Activated CD4-positive, alpha-beta memory T cell treated with anti-CD3 and anti-CD28 coated beads for 36 hours (primary cell): ENCODE measurements at regions of chr3 and their contacts with region 1.

Region 1: DNA sequence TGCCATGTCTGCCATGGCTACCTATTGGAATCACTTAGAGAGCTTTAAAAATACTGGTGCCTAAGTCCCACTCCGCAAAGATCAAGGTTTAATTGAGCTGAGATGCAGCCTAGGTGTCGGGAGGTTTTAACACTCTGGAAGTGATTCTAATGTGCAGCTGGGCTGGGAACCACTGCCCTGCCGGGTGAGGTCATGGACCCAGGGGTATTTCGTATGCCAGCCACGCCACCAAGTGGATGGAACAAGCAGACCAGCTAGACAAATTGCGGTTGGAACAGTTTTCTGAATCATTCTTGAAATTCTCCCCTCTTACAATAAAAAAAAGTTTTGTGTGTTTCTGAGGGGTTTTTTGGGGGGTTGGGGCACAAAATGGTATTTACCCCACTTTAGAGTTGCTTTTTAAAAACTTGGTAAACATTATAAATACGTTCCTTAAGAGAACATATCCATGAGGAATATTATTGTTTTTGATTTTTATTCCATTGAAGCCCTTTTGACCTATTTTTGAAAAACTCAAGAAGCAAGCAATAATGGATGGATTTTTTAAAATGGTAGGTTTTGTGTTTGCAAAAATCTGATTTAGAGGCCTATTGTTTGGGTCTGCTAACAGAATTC is 66.2 kb upstream of the CSTA start:
- DNase-seq: peak; percentile 81
- H3K4me3 Mint-ChIP-seq: no peak overlapping the region
- H3K27ac Mint-ChIP-seq: peak overlapping the region; percentile 45
- H3K4me1 Mint-ChIP-seq: peaks cover 19% of the 10 kb centered on the region
- H3K27me3 Mint-ChIP-seq: peaks cover 15% of the 10 kb centered on the region

Region 2: GRCh38 chr3:121735047-121735696 is 523.7 kb before region 1 on chr3:
- CTCF ChIA-PET with region 1: no interaction called
- POLR2A ChIA-PET with region 1: no interaction called
- intact Hi-C with region 1: loop called (anchors 5 kb)
- DNase-seq: no peak
- H3K4me3 Mint-ChIP-seq: no peak overlapping the region
- H3K27ac Mint-ChIP-seq: peak overlapping the region; percentile 28
- H3K4me1 Mint-ChIP-seq: peaks cover 46% of the 10 kb centered on the region
- H3K27me3 Mint-ChIP-seq: no peaks in the 10 kb centered on the region

Region 3: DNA sequence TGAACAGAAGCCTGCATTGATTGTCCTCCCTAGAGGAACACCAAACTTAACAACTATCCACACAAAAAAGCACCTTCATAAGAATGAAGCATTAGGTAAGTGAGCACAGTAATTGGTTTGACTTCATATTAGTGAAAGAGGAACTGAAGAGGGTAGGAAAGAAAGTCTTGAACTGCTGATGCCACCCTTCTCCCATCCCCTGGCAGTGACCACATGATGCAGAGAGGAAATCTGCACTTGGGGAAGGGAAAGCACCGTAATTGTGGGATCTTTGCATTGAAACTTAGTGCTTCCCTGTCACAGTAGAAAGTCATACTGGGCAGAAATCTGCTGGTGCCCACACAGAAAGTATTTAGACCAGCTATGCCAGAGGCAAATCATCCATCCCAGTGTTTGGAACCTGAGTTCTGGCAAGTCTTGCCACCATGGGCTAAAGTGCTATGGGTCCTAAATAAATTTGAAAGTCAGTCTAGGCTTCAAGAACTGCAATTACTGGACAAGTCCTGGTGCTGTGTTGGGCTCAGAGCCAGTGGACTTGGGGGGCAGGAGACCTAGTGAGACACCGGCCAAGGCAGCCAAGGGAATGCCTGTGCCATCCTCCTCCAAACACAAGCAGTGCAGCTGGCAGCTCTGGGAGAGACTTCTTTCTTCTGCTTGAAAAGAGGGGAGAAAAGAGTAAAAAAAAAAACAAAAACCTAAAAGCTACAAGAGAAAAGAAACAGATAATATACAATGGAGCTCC is 301.0 kb before region 1 on chr3:
- CTCF ChIA-PET with region 1: no interaction called
- POLR2A ChIA-PET with region 1: no interaction called
- intact Hi-C with region 1: no loop called
- DNase-seq: no peak
- H3K4me3 Mint-ChIP-seq: no peak overlapping the region
- H3K27ac Mint-ChIP-seq: no peak overlapping the region
- H3K4me1 Mint-ChIP-seq: no peaks in the 10 kb centered on the region
- H3K27me3 Mint-ChIP-seq: no peaks in the 10 kb centered on the region

Region 4: DNA sequence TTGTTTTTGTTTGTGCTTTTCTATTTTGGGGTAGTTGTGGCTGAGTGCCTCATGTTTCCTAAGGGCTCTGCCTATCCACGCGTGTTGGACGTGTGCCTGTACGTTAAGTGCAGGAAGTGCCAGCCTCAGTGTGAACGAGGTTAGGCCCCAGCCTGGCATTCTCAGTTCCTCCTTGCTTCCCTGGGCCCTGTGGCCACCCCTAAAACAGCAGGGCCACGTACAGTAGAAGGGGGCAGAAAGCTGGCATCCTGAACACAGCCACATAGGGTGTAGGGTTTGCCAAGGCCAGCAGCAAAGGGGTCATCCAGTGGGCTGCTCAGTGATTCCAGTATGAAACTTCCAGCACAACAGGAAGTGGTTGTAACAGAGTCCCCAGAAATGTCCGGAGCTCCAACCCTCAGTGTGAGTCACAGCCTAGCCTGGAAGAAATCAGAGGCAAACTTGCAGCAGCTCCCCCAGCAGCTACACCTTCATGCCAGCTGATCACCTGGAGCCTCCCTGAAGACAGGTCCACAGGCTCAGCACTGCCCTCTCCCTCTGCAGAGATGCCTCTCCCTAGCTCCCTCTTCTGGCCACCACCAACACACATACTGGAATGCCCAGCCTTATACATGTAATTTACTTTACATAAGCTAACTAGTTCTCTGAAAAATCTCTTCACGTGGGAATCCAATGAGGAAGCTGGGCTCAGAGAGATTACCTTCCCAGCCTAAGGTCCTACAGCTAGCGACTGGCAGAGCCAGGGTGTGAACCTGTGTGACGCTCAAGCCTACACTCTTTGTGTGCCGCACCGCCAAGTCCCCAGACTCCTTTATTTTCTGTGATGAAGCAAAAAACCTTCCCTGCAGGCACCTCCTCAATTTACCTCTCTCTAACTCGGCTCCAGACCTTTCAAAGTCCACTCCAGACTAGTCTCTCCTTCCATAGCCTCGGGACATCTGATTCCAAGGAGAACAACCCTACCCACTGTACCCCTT is 263.4 kb before region 1 on chr3:
- CTCF ChIA-PET with region 1: interaction called, 6 read pairs
- POLR2A ChIA-PET with region 1: no interaction called
- intact Hi-C with region 1: loop called (anchors 5 kb)
- DNase-seq: peak; percentile 40
- H3K4me3 Mint-ChIP-seq: no peak overlapping the region
- H3K27ac Mint-ChIP-seq: no peak overlapping the region
- H3K4me1 Mint-ChIP-seq: peaks cover 29% of the 10 kb centered on the region
- H3K27me3 Mint-ChIP-seq: no peaks in the 10 kb centered on the region

Region 5: GRCh38 chr3:122227036-122227781 is 31.7 kb before region 1 on chr3:
- CTCF ChIA-PET with region 1: no interaction called
- POLR2A ChIA-PET with region 1: no interaction called
- intact Hi-C with region 1: no loop called
- DNase-seq: no peak
- H3K4me3 Mint-ChIP-seq: no peak overlapping the region
- H3K27ac Mint-ChIP-seq: no peak overlapping the region
- H3K4me1 Mint-ChIP-seq: peaks cover 2% of the 10 kb centered on the region
- H3K27me3 Mint-ChIP-seq: peaks cover 6% of the 10 kb centered on the region

Region 6: DNA sequence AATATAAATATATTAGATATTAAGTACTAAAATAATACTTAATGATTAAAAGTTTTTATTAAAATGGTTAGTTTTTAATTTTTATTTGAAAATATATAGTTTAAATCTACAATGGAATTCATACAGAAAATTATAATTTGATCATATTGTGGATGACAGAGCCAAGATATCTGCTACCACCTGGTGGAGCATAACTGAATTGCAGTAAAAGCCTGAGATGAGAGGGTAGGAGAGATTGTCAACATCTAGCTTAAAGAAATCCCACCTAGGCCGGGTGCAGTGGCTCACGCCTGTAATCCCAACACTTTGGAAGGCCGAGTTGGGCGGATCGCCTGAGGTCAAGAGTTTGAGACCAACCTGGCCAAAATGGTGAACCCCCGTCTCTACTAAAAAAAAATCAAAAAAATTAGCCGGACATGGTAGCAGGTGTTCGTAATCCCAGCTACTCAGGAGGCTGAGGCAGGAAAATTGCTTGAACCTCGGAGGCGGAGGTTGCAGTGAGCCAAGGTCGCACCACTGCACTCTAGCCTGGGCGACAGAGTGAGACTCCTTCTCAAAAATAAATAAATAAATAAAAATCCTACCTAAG is 41.1 kb after region 1 on chr3:
- CTCF ChIA-PET with region 1: interaction called, 6 read pairs
- POLR2A ChIA-PET with region 1: no interaction called
- intact Hi-C with region 1: loop called (anchors 2 kb)
- DNase-seq: no peak
- H3K4me3 Mint-ChIP-seq: no peak overlapping the region
- H3K27ac Mint-ChIP-seq: no peak overlapping the region
- H3K4me1 Mint-ChIP-seq: peaks cover 18% of the 10 kb centered on the region
- H3K27me3 Mint-ChIP-seq: no peaks in the 10 kb centered on the region